PC-3 (cell line): ENCODE measurements at regions of chr16 and their contacts with region 1.

Region 1: DNA sequence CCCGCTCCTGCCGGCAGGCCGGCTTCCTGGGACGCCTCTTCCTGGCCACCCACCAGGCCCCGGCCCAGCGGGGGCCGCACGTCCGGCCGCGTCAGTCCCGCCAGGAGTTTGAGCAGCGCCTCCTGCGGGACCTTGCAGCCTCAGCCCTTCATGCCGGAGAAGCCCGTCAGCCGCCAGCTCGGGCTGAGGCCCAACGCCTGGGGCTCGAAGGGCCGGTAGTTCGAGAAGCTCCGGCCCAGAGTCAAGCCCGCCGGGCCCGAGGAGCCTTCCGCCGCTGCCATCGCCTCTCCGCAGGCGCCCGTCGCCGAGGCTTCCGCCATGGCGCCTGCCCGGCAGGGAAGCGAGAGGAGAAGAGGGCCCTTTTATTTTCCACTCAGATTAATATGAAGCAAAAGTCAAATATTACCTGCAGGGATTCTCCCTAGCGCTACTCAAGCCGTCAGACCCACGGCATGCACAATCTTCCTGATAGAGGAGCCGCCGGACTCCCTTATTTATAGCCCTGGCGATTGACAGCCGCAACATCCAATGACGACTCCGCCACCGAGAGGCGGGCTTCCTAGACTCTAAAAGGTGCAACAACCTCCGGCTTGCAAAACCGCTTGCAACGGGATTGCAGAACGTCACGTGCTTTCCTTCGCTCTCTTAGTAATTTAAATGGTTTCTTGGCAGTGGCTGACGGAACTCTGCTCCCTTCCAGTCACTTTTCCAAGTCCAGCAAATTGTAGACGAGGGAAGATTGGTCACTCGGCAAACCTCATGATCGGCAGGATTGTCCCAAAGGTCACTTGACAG is at the start of gene SEPHS2:
- DNase-seq: peak; percentile 95
- ATAC-seq: peak; percentile 92
- H3K4me3 ChIP-seq: peak within 1 kb of the TSS; percentile 96
- H3K27ac ChIP-seq: peak within 1 kb of the TSS; percentile 50
- H3K4me1 ChIP-seq: peaks cover 19% of the 10 kb centered on the region
- H3K27me3 ChIP-seq: no peaks in the 10 kb centered on the region
- CTCF ChIP-seq: peak; percentile 52
- total RNA-seq, gene SEPHS2: 8.4 and 16.8 TPM in 2 replicates

Region 2: GRCh38 chr16:30526823-30527635 is 81.4 kb after region 1 on chr16:
- CTCF ChIA-PET with region 1: no interaction called
- POLR2A ChIA-PET with region 1: no interaction called
- intact Hi-C with region 1: loop called (anchors 10 kb)
- DNase-seq: peak; percentile 95
- ATAC-seq: peak; percentile 89
- H3K4me3 ChIP-seq: peak overlapping the region; percentile 89
- H3K27ac ChIP-seq: peak overlapping the region; percentile 88
- H3K4me1 ChIP-seq: peaks cover 7% of the 10 kb centered on the region
- H3K27me3 ChIP-seq: no peaks in the 10 kb centered on the region
- CTCF ChIP-seq: peak; percentile 21; the same call in 1 of the 2 replicates